ENCODE measurements at regions of chr1 and their contacts with region 1.

Region 1: DNA sequence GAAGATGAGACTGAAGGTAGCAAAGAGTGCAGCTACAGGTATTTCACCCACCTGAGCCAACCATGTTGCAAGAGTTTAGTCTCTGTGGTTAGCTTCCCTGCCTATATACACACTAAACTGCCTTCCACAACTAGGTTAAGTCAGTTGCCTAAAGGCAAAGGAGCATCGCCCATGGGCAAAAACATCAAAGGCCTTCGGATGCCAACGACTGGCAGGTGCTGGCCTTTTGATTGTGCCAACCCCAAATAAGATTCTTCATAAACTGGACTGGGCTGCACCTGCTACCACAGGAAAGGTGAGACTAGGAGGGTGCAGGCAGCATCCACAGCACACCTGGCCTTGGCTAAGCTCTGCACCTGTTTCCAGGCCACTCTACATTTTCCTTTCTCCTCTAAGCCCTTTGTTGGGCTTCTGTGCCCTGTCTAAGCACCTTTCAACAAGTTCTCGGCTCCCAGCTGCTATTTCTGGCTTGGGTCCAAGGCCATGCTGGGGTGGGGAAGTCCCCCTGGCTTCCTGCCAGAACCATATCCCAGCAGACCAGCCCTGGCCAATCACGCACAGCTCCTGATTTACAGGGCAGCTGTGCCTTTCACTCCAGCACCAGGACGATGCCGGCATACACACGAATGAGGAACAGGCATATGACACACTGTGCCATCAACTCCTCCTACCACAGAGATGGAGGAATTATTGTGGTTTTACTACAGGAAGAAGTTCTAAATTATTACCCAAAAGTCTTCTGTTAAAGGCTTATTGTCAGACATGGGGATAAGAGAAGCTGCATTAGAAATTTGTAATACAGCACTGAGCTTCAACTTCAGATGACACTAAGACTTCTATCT is 37.8 kb downstream of the TRIT1 start:
- DNase-seq: peak; percentile 27 to 94 (median 62)

Region 2: GRCh38 chr1:39525366-39526165 is 319.9 kb before region 1 on chr1:
- intact Hi-C with region 1: no loop called
- DNase-seq: peak in 1 of 10 donors; percentile 67

Region 3: GRCh38 chr1:39901698-39902459 is 56.4 kb after region 1 on chr1 and contains the start of gene MYCL:
- intact Hi-C with region 1: loop called (anchors 10 kb)
- DNase-seq: peak; percentile 57 to 97 (median 72)

Measured in posterior cingulate gyrus (tissue), 11 donors.